Activated T-helper 1 cell treated with anti-CD3 and anti-CD28 coated beads, Interleukin-12 subunit alpha, Interleukin-12 subunit beta, Interleukin-2, Interleukin-4 antibody, amounts not matched to agents 30 ng/mL and 10 ng/mL and 1 ng/mL, durations not matched to agents 14 hours and 24 hours and 36 hours (primary cell): ENCODE measurements at regions of chr15 and their contacts with region 1.

Region 1: GRCh38 chr15:75738647-75739331 is 26.1 kb upstream of the CSPG4 start:
- DNase-seq: peak; percentile 85
- H3K4me3 Mint-ChIP-seq: peak overlapping the region; percentile 75
- H3K27ac Mint-ChIP-seq: peak overlapping the region; percentile 29
- H3K4me1 Mint-ChIP-seq: peaks cover 6% of the 10 kb centered on the region
- H3K27me3 Mint-ChIP-seq: peaks cover 13% of the 10 kb centered on the region

Region 2: GRCh38 chr15:75758071-75758872 is 19.5 kb after region 1 on chr15:
- intact Hi-C with region 1: loop called (anchors 1 kb)
- DNase-seq: peak; percentile 60
- H3K4me3 Mint-ChIP-seq: peak overlapping the region; percentile 92
- H3K27ac Mint-ChIP-seq: peak overlapping the region; percentile 90
- H3K4me1 Mint-ChIP-seq: peaks cover 16% of the 10 kb centered on the region
- H3K27me3 Mint-ChIP-seq: peaks cover 6% of the 10 kb centered on the region

Region 3: DNA sequence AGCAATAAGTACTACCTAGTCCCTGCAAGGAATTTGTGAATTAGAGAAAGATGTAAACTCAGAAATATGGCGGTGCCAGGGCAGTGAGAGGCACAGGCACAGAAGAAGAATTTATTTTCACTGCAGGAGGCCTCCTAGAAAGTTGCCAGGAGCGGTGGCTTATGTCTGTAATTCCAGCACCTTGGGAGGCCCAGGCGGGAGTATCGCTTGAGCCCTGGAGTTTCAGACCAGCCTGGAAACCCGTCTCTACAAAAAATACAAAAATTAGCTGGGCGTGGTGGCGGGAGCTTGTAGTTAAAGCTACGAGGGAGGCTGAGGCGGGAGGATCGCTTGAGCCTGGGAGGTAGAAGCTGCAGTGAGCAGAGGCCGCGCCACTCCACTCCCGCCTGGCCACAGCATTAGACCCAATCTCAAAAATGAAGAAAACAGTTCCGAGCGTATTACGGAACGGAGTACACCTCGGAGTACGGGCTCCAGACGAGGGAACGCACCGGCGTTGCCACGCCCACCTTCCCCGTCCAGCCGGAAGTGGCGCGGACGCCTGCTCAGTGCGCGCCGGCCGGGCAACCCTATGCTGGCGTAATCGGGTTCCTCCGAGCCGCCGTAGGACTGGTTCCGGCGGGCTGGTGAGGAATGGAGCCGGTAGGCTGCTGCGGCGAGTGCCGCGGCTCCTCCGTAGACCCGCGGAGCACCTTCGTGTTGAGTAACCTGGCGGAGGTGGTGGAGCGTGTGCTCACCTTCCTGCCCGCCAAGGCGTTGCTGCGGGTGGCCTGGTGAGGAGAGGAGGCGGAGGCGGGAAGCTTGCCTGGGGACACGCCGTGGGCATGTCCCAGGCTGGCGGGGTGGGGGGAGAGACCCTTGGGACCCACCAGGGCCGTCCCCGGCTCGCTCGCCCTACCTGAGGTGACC is 164.8 kb after region 1 on chr15 and contains the start of gene FBXO22:
- intact Hi-C with region 1: loop called (anchors 10 kb)
- DNase-seq: peak; percentile 89
- H3K4me3 Mint-ChIP-seq: peak within 1 kb of the TSS; percentile 99
- H3K27ac Mint-ChIP-seq: peak within 1 kb of the TSS; percentile 98
- H3K4me1 Mint-ChIP-seq: peaks cover 35% of the 10 kb centered on the region
- H3K27me3 Mint-ChIP-seq: no peaks in the 10 kb centered on the region
- total RNA-seq, gene FBXO22: 49.4 and 50.0 TPM in 2 replicates

Region 4: DNA sequence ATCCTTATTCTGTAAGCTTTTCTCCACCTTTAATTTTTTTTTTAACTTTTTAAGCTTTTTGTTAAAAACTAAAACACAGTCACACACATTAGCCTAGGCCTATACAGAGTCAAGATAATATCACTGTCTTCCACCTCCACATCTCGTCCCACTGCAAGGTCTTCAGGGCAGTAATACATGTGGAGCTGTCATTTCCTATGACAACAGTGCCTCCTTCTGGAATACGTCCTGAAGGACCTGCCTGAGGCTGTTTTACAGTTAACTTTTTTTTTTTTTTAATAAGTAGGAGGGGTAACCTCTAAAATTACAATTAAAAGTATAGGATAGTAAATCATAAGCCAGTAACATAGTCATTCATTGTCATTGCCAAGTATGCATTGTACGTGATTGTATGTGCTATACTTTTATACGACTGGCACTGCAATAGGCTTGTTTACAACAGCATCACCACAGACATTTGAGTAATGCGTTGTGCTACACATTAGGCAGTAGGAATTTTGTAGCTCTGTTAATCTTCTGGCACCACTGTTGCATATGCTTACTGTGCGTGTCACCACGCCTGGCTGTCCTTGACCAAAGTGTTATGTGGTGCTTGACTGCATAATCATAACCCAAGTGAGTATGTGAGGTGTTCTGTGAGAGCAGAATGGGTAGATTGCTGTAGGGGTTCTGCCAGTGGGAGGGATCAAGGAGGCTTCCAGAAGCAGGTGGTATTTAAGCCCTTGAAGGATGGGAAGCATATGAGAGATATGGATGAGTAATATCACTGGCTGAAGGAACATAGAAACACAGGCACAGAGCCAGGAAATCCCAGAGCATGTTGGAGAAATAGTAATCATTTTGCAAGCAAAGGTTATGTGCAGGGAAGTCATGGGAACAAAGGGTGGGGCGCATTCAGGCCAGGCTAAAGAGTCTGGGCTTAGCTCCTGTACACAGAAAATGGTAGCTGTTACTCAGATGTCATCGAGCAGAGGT is 183.2 kb after region 1 on chr15:
- intact Hi-C with region 1: loop called (anchors 5 kb)
- DNase-seq: no peak
- H3K4me3 Mint-ChIP-seq: no peak overlapping the region
- H3K27ac Mint-ChIP-seq: peak overlapping the region; percentile 20
- H3K4me1 Mint-ChIP-seq: peaks cover 33% of the 10 kb centered on the region
- H3K27me3 Mint-ChIP-seq: no peaks in the 10 kb centered on the region